Endothelial cell of umbilical vein (primary cell): ENCODE measurements at regions of chr7 and their contacts with region 1.

Region 1: DNA sequence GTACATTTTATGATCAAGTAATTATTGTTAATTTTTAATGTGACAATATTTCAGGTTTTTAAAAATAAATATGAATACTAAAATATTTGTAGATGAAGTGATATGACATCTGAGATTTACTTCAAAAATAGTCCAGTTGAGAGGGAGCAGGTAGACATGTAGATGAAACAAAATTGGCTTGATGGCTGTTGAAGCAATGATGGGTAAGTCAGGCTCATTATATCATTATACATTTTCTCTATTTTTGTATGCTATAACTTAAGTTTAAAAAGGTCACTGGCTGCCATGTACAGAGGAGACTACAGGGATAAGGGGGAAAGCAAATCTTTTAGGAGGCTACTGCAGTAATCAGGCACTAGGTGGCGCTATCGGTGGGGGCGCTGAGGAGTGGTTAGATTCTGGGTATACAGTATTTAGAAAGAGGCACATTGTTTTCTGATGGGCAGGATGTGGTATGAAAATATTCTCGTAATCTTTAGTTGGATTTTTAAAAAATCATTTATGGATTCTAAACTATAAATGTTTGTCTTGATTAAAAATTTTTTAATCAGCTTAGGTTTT is 189.8 kb upstream of the IMMP2L start:
- DNase-seq: peak; percentile 63
- H3K4me3 ChIP-seq: no peak overlapping the region
- H3K27ac ChIP-seq: no peak overlapping the region
- H3K4me1 ChIP-seq: no peaks in the 10 kb centered on the region
- H3K27me3 ChIP-seq: no peaks in the 10 kb centered on the region
- CTCF ChIP-seq: peak; percentile 85 to 89
- POLR2A ChIP-seq: no peak

Region 2: GRCh38 chr7:111763221-111763801 is 11.2 kb after region 1 on chr7:
- CTCF ChIA-PET with region 1: interaction called, 19 read pairs
- POLR2A ChIA-PET with region 1: interaction called, 5 read pairs
- dilution Hi-C with region 1: no loop called
- intact Hi-C with region 1: no loop called
- DNase-seq: peak; percentile 46
- H3K4me3 ChIP-seq: no peak overlapping the region
- H3K27ac ChIP-seq: no peak overlapping the region
- H3K4me1 ChIP-seq: no peaks in the 10 kb centered on the region
- H3K27me3 ChIP-seq: no peaks in the 10 kb centered on the region
- CTCF ChIP-seq: peak; percentile 15 to 39
- POLR2A ChIP-seq: no peak

Region 3: DNA sequence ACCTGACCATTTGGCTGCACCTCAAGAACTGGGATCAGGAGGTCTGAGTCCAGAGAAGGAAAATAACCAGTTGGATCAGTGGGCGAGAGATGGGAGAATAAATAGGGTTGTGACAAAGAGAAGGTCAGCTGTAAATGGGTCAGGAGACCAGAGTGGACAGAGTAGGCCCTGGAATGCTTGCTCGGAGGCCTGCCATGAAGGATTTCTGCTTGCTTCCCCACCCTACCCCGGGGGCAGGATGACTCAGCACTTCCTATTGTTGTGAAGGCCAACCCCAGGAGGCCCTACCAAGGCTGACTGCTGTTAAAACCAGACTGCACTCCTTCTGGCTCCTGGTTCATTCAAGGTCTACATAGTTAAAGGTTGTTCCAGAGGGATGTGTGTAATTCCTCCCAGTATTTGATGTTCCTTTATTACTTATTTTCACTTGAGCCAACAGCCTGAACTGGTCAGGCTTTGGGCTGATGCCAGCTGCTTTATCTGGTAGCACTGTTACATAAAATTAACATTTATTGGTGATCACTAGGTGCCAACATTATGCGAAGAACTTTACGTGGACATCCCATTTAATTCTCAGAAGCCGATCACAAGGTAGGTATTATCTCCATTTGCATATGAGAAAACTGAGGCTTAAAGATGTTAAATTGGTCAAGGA is 670.9 kb after region 1 on chr7:
- CTCF ChIA-PET with region 1: no interaction called
- POLR2A ChIA-PET with region 1: no interaction called
- dilution Hi-C with region 1: loop called (anchors 25 kb)
- intact Hi-C with region 1: no loop called
- DNase-seq: peak; percentile 94
- H3K4me3 ChIP-seq: no peak overlapping the region
- H3K27ac ChIP-seq: peak overlapping the region; percentile 53
- H3K4me1 ChIP-seq: peaks cover 18% of the 10 kb centered on the region
- H3K27me3 ChIP-seq: no peaks in the 10 kb centered on the region
- CTCF ChIP-seq: no peak
- POLR2A ChIP-seq: peak; percentile 59

Region 4: DNA sequence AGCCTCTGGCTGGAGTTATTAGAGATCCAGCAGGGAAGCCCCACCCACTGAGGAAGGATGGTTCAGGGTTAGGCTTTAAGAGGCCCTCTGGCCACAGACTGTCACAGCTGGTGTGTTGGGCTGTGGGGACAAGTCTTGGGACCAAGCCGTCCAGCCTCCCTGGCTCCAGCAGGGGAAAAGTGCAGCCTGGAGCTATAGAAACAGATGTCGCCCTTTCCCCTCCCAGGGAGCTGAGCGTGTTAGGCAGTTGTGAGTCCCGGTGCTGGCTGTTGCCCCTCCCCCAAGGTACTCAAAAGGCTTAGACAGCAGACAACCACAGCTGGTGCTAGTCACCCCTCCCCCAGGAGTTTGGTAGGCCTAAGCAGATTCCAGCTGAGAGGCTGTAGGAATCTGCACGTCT is 894.7 kb after region 1 on chr7:
- CTCF ChIA-PET with region 1: no interaction called
- POLR2A ChIA-PET with region 1: no interaction called
- dilution Hi-C with region 1: no loop called
- intact Hi-C with region 1: no loop called
- DNase-seq: no peak
- H3K4me3 ChIP-seq: no peak overlapping the region
- H3K27ac ChIP-seq: no peak overlapping the region
- H3K4me1 ChIP-seq: no peaks in the 10 kb centered on the region
- H3K27me3 ChIP-seq: no peaks in the 10 kb centered on the region
- CTCF ChIP-seq: no peak
- POLR2A ChIP-seq: no peak